Dendritic cell treated with granulocyte-macrophage colony-stimulating factor and Interleukin-4, amounts not matched to agents 40 ng/mL and 50 ng/mL, for 4 days (primary cell): ENCODE measurements at regions of chr20 and their contacts with region 1.

Region 1: DNA sequence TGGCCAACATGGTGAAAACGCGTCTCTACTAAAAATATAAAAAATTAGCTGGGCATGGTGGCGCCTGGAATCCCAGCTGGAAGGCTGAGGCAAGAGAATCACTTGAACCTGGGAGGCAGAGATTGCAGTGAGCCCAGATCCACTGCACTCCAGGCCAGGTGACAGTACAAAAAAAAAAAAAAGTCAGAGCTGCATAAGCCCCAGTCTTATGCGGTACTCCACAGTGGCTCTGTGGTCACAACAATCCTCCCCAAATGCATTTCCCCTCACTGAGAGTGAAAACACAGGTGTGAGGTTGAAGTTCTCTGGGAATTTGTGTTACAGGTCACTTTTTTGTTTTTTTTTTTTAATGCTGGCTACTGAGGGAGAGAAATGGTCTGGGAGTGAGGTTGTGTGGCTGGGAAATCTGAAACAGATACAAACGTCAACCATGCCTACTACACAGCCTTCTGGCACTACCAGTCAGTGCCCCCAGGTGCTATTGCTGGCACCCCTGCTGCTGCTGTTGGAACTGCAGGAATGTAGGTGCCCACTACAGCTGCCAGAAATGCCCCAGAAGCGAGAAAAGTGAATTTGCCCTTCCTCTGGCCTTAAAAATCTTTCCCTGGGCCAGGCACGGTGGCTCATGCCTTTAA is 5.7 kb downstream of the MRPS26 start:
- H3K4me3 Mint-ChIP-seq: no peak overlapping the region
- H3K27ac Mint-ChIP-seq: no peak overlapping the region
- H3K4me1 Mint-ChIP-seq: peaks cover 16% of the 10 kb centered on the region
- H3K27me3 Mint-ChIP-seq: no peaks in the 10 kb centered on the region

Region 2: DNA sequence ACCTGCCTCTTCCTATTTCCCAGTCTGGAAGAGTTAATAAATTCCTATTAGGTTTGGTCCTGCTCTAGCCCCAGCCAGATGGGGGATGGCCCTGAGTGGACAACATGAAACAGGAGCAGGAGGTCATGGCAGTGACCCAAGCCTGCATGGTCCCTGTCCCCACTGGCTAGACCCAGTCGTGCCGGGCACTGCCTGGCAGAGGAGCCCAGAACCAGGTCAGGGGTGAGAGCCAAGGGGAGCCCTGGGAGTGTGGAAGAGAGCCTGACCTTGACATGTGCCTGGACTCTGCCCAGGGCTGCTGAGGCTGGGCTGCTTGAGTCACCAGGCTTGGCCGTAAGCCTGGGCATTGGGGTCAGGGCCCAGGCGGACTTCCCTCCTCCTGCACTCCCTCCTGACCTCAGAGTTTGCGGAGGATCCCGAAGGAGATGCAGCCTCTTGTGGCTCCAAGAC is 29.5 kb after region 1 on chr20:
- intact Hi-C with region 1: no loop called
- H3K4me3 Mint-ChIP-seq: peak overlapping the region; percentile 15
- H3K27ac Mint-ChIP-seq: no peak overlapping the region
- H3K4me1 Mint-ChIP-seq: peaks cover 55% of the 10 kb centered on the region
- H3K27me3 Mint-ChIP-seq: peaks cover 77% of the 10 kb centered on the region

Region 3: DNA sequence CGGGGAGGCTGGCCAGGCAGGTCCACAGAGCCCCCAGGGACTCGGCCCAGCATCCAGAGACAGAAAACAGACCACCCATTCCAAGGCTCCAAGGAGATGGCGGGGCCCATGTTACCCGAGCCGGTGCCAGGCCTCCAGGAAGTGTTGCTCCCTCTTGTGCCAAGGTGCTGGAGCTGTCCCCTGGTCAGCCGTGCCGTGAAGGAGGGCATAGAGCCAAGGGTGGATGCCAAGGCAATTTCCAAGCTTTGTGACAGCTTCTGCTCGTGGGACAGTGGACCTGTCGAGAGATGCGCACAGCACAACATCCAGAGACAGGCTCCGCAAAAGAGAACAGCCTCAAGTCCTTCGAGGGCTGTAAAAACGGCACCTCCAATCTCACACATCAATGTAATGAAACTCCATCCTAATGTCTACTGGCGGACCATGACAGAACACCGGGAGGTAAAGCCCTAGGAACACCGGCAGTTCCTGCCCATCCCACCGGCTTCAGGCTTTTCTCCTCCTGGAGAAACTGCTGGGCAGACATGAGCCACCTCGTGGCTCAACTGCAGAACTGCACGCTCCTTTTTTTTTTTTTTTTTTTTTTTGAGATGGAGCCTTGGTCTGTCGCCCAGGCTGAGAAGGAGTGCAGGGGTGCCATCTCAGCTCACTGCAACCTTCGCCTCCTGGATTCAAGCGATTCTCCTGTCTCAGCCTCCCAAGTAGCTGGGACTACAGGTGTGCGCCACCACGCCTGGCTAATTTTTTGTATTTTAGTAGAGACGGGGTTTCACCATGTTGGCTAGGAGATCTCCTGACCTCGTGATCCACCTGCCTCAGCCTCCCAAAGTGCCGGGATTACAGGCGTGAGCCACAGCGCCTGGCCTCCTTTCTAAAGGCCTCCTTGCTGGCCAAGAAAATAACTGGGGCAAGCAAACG is 63.9 kb after region 1 on chr20:
- intact Hi-C with region 1: loop called (anchors 1 kb)
- H3K4me3 Mint-ChIP-seq: no peak overlapping the region
- H3K27ac Mint-ChIP-seq: no peak overlapping the region
- H3K4me1 Mint-ChIP-seq: peaks cover 16% of the 10 kb centered on the region
- H3K27me3 Mint-ChIP-seq: no peaks in the 10 kb centered on the region

Region 4: GRCh38 chr20:3126527-3126859 is 75.0 kb after region 1 on chr20:
- intact Hi-C with region 1: no loop called
- H3K4me3 Mint-ChIP-seq: no peak overlapping the region
- H3K27ac Mint-ChIP-seq: no peak overlapping the region
- H3K4me1 Mint-ChIP-seq: peaks cover 7% of the 10 kb centered on the region
- H3K27me3 Mint-ChIP-seq: no peaks in the 10 kb centered on the region

Region 5: GRCh38 chr20:3276680-3277015 is 225.1 kb after region 1 on chr20:
- intact Hi-C with region 1: loop called (anchors 10 kb)
- H3K4me3 Mint-ChIP-seq: no peak overlapping the region
- H3K27ac Mint-ChIP-seq: no peak overlapping the region
- H3K4me1 Mint-ChIP-seq: peaks cover 13% of the 10 kb centered on the region
- H3K27me3 Mint-ChIP-seq: no peaks in the 10 kb centered on the region